ENCODE measurements at regions of chr13 and their contacts with region 1.

Region 1: GRCh38 chr13:49669735-49670309 is 21.5 kb downstream of the EBPL start:
- DNase-seq: peak; percentile 60
- ATAC-seq: peak; percentile 96
- H3K4me3 ChIP-seq: no peak overlapping the region
- H3K27ac ChIP-seq: no peak overlapping the region
- H3K4me1 ChIP-seq: no peaks in the 10 kb centered on the region
- H3K27me3 ChIP-seq: no peaks in the 10 kb centered on the region
- CTCF ChIP-seq: peak; percentile 81
- EP300 ChIP-seq: no peak
- POLR2A ChIP-seq: no peak
- RAD21 ChIP-seq: peak; percentile 84

Region 2: DNA sequence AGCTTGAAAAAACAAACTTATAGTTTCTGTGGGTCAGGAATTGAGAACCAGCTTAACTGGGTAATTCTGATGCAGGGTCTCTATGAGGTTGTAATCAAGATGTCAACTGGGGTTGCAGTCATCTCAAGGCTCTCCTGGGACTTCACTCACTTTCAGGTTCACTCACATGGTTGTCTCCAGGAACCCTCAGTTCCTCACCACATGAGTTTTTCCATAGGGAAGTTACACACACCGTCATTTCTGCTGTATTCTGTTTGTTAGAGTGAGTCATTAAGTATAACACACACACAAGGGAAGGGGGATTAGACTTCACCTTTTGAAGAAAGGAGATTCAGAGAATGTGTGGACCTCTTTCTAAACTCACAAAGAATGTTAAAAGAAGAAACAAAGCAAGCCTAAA is 484.6 kb before region 1 on chr13:
- CTCF ChIA-PET with region 1: no interaction called
- POLR2A ChIA-PET with region 1: no interaction called
- in situ Hi-C with region 1: no loop called
- intact Hi-C with region 1: no loop called
- DNase-seq: no peak
- ATAC-seq: no peak
- H3K4me3 ChIP-seq: no peak overlapping the region
- H3K27ac ChIP-seq: no peak overlapping the region
- H3K4me1 ChIP-seq: no peaks in the 10 kb centered on the region
- H3K27me3 ChIP-seq: no peaks in the 10 kb centered on the region
- CTCF ChIP-seq: no peak
- EP300 ChIP-seq: no peak
- POLR2A ChIP-seq: no peak
- RAD21 ChIP-seq: no peak

Region 3: DNA sequence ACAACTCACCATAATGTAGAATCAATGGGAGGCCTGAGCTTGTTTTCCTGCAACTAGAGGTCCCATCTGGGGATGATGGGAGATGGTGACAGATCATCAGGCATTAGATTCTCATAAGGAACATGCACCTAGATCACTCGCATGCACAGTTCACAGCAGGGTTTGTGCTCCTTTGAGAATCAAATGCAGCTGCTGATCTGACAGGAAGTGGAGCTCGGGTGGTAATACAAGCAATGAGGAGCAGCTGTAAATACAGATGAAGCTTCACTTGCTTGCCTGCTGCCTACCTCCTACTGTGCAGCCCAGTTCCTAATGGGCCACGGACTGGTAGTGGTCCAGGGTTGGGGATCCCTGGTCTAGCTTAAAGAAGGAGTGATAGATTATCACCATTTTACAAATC is 89.7 kb after region 1 on chr13:
- CTCF ChIA-PET with region 1: no interaction called
- POLR2A ChIA-PET with region 1: no interaction called
- in situ Hi-C with region 1: no loop called
- intact Hi-C with region 1: no loop called
- DNase-seq: no peak
- ATAC-seq: no peak
- H3K4me3 ChIP-seq: no peak overlapping the region
- H3K27ac ChIP-seq: no peak overlapping the region
- H3K4me1 ChIP-seq: peaks cover 28% of the 10 kb centered on the region
- H3K27me3 ChIP-seq: no peaks in the 10 kb centered on the region
- CTCF ChIP-seq: no peak
- EP300 ChIP-seq: no peak
- POLR2A ChIP-seq: no peak
- RAD21 ChIP-seq: no peak

Region 4: DNA sequence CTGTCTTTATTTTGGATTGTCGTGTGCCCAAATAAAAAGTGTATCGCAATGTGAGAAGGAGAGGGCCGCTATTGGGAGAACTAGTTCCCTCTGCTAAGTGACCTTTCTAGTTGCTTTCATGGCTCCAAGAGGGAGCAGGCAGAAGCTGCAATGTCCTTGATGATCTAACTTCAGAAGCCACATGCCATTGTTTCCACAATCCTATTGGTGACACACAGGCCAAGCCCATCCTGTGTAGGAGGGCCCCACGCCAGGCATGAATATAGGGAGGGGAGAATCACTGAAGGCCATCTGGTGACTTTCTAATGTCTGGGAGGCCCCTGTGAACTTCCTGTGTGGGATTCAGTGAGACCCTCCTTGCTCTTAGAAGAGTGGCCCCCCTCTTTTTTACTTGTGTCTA is 170.4 kb after region 1 on chr13:
- CTCF ChIA-PET with region 1: no interaction called
- POLR2A ChIA-PET with region 1: no interaction called
- in situ Hi-C with region 1: loop called (anchors 10 kb)
- intact Hi-C with region 1: loop called (anchors 2 kb)
- DNase-seq: peak; percentile 61
- ATAC-seq: peak; percentile 32; the same call in 2 of the 3 replicates
- H3K4me3 ChIP-seq: no peak overlapping the region
- H3K27ac ChIP-seq: no peak overlapping the region
- H3K4me1 ChIP-seq: peaks cover 51% of the 10 kb centered on the region
- H3K27me3 ChIP-seq: no peaks in the 10 kb centered on the region
- CTCF ChIP-seq: no peak
- EP300 ChIP-seq: no peak
- POLR2A ChIP-seq: no peak
- RAD21 ChIP-seq: no peak

Region 5: GRCh38 chr13:51070005-51070649 is 1400.3 kb after region 1 on chr13:
- CTCF ChIA-PET with region 1: no interaction called
- POLR2A ChIA-PET with region 1: no interaction called
- in situ Hi-C with region 1: loop called (anchors 25 kb)
- intact Hi-C with region 1: no loop called
- DNase-seq: peak; percentile 44
- ATAC-seq: peak; percentile 95
- H3K4me3 ChIP-seq: no peak overlapping the region
- H3K27ac ChIP-seq: no peak overlapping the region
- H3K4me1 ChIP-seq: peaks cover 10% of the 10 kb centered on the region
- H3K27me3 ChIP-seq: peaks cover 0 to 21% of the 10 kb centered on the region in 2 experiments; a peak in 4 of 5 replicates
- CTCF ChIP-seq: peak; percentile 95
- EP300 ChIP-seq: no peak
- POLR2A ChIP-seq: no peak
- RAD21 ChIP-seq: peak; percentile 91

Measured in HepG2 (cell line).